ENCODE measurements at regions of chr3 and their contacts with region 1.

Region 1: GRCh38 chr3:131381444-131382291 is at the start of gene NUDT16:
- DNase-seq: peak; percentile 92 to 96 (median 94)
- H3K4me3 ChIP-seq: peak within 1 kb of the TSS; percentile 89 to 95
- H3K4me3 Mint-ChIP-seq: peak within 1 kb of the TSS; percentile 96 to 98 (median 96)
- H3K27ac ChIP-seq: peak within 1 kb of the TSS; percentile 61
- H3K27ac Mint-ChIP-seq: peak within 1 kb of the TSS; percentile 90 to 99 (median 96)
- H3K4me1 ChIP-seq: peaks cover 28% of the 10 kb centered on the region
- H3K4me1 Mint-ChIP-seq: peaks cover 33 to 43% (median 38%) of the 10 kb centered on the region in 4 donors
- H3K27me3 ChIP-seq: no peaks in the 10 kb centered on the region
- H3K27me3 Mint-ChIP-seq: no peaks in the 10 kb centered on the region
- total RNA-seq, gene NUDT16: 15.6 to 16.7 TPM

Region 2: GRCh38 chr3:130975251-130975650 is 406.4 kb before region 1 on chr3:
- CTCF ChIA-PET with region 1: no interaction called
- POLR2A ChIA-PET with region 1: no interaction called
- intact Hi-C with region 1: no loop called
- DNase-seq: no peak
- H3K4me3 ChIP-seq: no peak overlapping the region
- H3K4me3 Mint-ChIP-seq: no peak overlapping the region
- H3K27ac ChIP-seq: no peak overlapping the region
- H3K27ac Mint-ChIP-seq: peak overlapping the region in 2 of 7 donors; percentile 13 to 85
- H3K4me1 ChIP-seq: no peaks in the 10 kb centered on the region
- H3K4me1 Mint-ChIP-seq: no peaks in the 10 kb centered on the region
- H3K27me3 ChIP-seq: no peaks in the 10 kb centered on the region
- H3K27me3 Mint-ChIP-seq: no peaks in the 10 kb centered on the region

Region 3: DNA sequence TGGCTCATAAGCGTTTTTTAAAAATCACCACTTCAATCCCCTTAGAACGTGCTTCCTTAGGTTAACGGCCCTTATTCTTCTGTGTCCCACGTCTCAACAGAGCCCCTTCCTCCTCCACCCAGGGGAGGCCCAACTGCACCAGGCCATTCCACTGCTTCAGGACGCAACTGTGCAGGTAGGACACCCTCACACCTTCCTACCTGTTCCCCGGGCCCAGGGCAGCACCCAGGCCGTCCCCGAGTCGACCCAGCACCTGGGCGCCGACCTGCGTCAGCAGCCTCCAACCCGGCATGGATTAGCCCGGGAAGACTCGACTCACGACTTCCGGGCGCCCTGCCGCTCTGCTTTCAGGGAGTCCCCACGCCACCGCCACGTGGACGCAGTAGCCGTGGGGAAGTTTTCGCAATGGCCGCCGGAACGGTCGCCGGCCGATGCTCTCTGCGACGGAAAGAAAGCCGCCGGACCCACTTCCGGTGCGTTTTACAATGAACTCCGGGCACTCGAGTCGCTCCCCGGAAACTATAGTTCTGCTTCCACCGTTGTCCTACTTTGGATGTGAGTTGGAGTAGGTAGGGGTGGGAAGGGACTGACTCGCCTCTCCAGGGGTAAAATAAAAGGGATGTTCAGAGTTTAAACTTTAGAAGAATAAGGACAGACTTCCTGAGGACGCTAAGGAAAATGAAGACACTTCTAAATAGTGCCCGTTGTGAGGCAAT is 121.0 kb after region 1 on chr3 and contains the start of gene MRPL3:
- CTCF ChIA-PET with region 1: interaction called, 3 read pairs
- POLR2A ChIA-PET with region 1: interaction called, 7 read pairs
- intact Hi-C with region 1: loop called (anchors 2 kb)
- DNase-seq: peak; percentile 79 to 85 (median 81)
- H3K4me3 ChIP-seq: peak within 1 kb of the TSS; percentile 74 to 98
- H3K4me3 Mint-ChIP-seq: peak within 1 kb of the TSS; percentile 91 to 100 (median 98)
- H3K27ac ChIP-seq: peak within 1 kb of the TSS; percentile 75
- H3K27ac Mint-ChIP-seq: peak within 1 kb of the TSS; percentile 92 to 97 (median 95)
- H3K4me1 ChIP-seq: peaks cover 27% of the 10 kb centered on the region
- H3K4me1 Mint-ChIP-seq: peaks cover 25 to 47% (median 38%) of the 10 kb centered on the region in 4 donors
- H3K27me3 ChIP-seq: no peaks in the 10 kb centered on the region
- H3K27me3 Mint-ChIP-seq: no peaks in the 10 kb centered on the region
- total RNA-seq, gene MRPL3: 45.8 to 48.1 TPM